HepG2 (cell line): ENCODE measurements at regions of chr20 and their contacts with region 1.

Region 1: DNA sequence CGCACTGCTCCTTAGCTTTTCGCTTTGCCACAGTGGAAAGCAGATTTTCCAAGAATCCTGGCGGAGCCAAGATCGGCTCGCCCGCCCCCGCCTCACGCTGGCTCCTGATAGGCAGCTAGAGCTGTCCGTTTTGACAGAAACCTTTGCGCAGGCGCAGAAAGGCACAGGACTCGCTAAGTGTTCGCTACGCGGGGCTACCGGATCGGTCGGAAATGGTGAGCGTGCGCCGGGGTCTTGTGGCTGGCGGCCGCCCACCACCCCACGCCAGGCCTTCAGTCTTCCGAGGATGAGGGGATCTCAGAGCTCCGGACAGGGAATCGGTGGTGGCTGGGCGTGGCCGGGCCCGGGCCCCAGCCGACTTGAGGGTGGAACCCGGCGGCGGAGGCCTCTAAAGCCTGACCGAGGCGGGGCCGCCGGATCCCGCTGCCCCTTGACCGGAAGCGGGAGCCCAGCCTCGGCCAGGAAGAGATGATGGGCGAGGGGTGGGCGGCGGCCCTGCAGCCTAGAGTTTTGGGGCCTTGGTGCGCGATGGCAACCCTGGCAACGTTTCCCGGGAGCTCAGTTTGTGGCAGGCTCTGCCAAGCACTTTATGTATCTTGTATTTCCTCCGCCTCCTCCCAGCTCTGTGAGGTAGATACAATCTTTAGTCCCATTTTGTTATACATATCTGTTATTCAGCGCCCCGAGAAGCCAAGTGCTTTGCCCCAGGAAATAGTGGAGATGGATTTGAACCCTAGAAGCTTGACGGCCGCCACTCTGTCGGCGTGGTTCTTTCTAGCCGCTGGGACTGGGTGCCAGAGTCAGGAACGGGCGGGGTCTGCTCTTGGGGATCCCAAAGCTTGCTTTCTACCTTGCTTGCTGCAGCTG is at the start of gene DYNLRB1:
- DNase-seq: peak; percentile 98
- ATAC-seq: peak; percentile 91
- H3K4me3 ChIP-seq: peak within 1 kb of the TSS; percentile 85 to 89 (median 87)
- H3K27ac ChIP-seq: peak within 1 kb of the TSS; percentile 80
- H3K4me1 ChIP-seq: peaks cover 62% of the 10 kb centered on the region
- H3K27me3 ChIP-seq: no peaks in the 10 kb centered on the region; a peak in 1 of 5 replicates
- CTCF ChIP-seq: 0 out of 2 replicates have a peak, but pooled peaks have one; percentile 15
- EP300 ChIP-seq: no peak; a peak in 2 of 4 replicates
- POLR2A ChIP-seq: peak; percentile 90 to 99
- RAD21 ChIP-seq: peak; percentile 55
- total RNA-seq, gene DYNLRB1: 140 and 151 TPM in 2 replicates

Region 2: DNA sequence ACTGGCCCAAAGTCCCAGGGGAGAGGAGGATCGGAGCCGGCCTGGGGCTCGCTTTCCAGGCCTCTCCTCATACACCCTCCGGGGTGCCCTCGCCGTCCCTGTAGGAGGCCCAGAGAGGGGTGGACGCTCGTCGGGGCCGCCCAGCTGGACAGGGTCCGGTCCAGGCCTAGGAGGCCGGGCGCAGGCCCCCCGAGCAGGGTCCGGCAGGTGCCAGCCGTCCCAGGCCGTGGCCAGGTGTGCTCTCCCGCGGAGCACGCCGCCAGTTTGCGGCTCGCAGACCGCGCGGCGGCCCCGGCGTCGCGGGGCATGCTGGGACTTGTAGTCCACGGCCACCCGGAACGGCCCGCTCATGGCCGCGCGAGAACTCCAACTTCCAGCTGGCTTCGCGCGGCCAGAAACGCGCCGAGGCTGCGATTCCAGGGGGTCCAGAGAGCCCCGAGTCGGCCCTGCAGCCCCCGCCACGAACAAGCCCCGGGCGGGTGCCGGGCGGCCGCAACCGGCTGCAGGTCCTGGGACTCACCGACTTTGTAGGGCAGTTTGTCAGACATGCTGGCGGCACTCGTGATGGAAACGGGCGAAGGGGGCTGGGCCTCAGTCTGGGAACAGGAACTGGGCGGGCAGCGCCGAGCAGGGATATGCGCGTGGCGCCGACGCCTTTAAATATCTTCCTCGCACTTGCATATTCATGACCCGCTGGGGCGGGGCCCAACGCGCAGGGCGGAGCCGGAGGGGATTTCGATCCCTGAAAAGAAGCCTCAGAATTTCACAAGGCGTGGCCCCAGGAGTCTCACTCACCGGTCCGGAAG is 213.6 kb before region 1 on chr20 and contains the start of gene AHCY:
- CTCF ChIA-PET with region 1: no interaction called
- POLR2A ChIA-PET with region 1: interaction called, 30 read pairs
- in situ Hi-C with region 1: no loop called
- intact Hi-C with region 1: loop called (anchors 2 kb)
- DNase-seq: peak; percentile 97
- ATAC-seq: peak; percentile 90
- H3K4me3 ChIP-seq: peak within 1 kb of the TSS; percentile 80 to 92 (median 90)
- H3K27ac ChIP-seq: peak within 1 kb of the TSS; percentile 83
- H3K4me1 ChIP-seq: peaks cover 71% of the 10 kb centered on the region
- H3K27me3 ChIP-seq: no peaks in the 10 kb centered on the region; a peak in 1 of 5 replicates
- CTCF ChIP-seq: no peak
- EP300 ChIP-seq: no peak; a peak in 1 of 4 replicates
- POLR2A ChIP-seq: peak; percentile 95 to 96
- RAD21 ChIP-seq: peak; percentile 67
- total RNA-seq, gene AHCY: 407 and 447 TPM in 2 replicates

Region 3: GRCh38 chr20:34473262-34473883 is 43.1 kb before region 1 on chr20:
- CTCF ChIA-PET with region 1: no interaction called
- POLR2A ChIA-PET with region 1: interaction called, 5 read pairs
- in situ Hi-C with region 1: no loop called
- intact Hi-C with region 1: loop called (anchors 2 kb)
- DNase-seq: peak; percentile 72
- ATAC-seq: peak; percentile 92
- H3K4me3 ChIP-seq: no peak overlapping the region
- H3K27ac ChIP-seq: no peak overlapping the region
- H3K4me1 ChIP-seq: peaks cover 10% of the 10 kb centered on the region
- H3K27me3 ChIP-seq: no peaks in the 10 kb centered on the region
- CTCF ChIP-seq: peak; percentile 94
- EP300 ChIP-seq: no peak
- POLR2A ChIP-seq: no peak
- RAD21 ChIP-seq: peak; percentile 85

Region 4: GRCh38 chr20:34493646-34494045 is 22.8 kb before region 1 on chr20:
- CTCF ChIA-PET with region 1: no interaction called
- POLR2A ChIA-PET with region 1: interaction called, 8 read pairs
- in situ Hi-C with region 1: no loop called
- intact Hi-C with region 1: loop called (anchors 2 kb)
- DNase-seq: no peak
- ATAC-seq: peak; percentile 43
- H3K4me3 ChIP-seq: no peak overlapping the region
- H3K27ac ChIP-seq: no peak overlapping the region
- H3K4me1 ChIP-seq: peaks cover 13% of the 10 kb centered on the region
- H3K27me3 ChIP-seq: no peaks in the 10 kb centered on the region
- CTCF ChIP-seq: no peak
- EP300 ChIP-seq: no peak
- POLR2A ChIP-seq: no peak
- RAD21 ChIP-seq: no peak

Region 5: GRCh38 chr20:34755367-34755766 is 238.9 kb after region 1 on chr20:
- CTCF ChIA-PET with region 1: no interaction called
- POLR2A ChIA-PET with region 1: no interaction called
- in situ Hi-C with region 1: no loop called
- intact Hi-C with region 1: no loop called
- DNase-seq: no peak
- ATAC-seq: no peak
- H3K4me3 ChIP-seq: no peak overlapping the region
- H3K27ac ChIP-seq: no peak overlapping the region
- H3K4me1 ChIP-seq: peaks cover 11% of the 10 kb centered on the region; the same call in 1 of the 2 replicates
- H3K27me3 ChIP-seq: no peaks in the 10 kb centered on the region
- CTCF ChIP-seq: no peak
- EP300 ChIP-seq: no peak
- POLR2A ChIP-seq: no peak
- RAD21 ChIP-seq: no peak